ENCODE measurements at regions of chr7 and their contacts with region 1.

Region 1: GRCh38 chr7:26078437-26079336 is 73.3 kb upstream of the NFE2L3 start:
- DNase-seq: peak; percentile 66
- H3K4me3 Mint-ChIP-seq: no peak overlapping the region
- H3K27ac Mint-ChIP-seq: no peak overlapping the region
- H3K4me1 Mint-ChIP-seq: peaks cover 9% of the 10 kb centered on the region
- H3K27me3 Mint-ChIP-seq: peaks cover 76% of the 10 kb centered on the region

Region 2: DNA sequence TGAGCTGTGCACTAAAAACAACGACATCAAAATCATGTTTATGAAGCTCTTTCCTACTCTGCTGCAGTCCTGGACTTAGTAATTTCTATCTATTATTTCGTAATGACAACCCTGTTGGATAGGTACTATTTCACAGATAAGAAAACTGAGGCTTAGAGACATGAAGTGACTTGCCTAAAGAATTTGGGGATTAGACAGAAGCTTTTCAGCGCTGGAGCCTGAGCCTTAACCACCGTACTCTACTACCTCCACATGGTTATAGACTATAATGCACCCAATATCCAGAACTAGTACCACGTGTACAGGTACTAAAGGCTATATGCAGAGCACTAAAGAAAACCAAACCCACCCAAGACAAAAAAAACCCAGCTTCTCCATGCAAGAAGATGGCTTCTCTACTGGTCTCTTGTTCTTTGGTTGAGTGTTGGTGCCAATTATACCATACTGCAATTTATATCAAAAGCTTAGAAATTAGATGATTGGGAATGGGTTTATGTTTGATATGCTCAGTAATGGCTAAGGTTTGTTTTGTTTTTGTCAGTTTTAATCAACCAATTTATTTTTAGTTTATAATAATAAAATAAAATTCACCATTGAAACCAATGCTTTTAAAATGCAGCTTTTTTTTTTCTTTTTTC is 206.4 kb after region 1 on chr7:
- intact Hi-C with region 1: loop called (anchors 1 kb)
- DNase-seq: no peak
- H3K4me3 Mint-ChIP-seq: no peak overlapping the region
- H3K27ac Mint-ChIP-seq: no peak overlapping the region
- H3K4me1 Mint-ChIP-seq: peaks cover 6% of the 10 kb centered on the region
- H3K27me3 Mint-ChIP-seq: no peaks in the 10 kb centered on the region

Region 3: DNA sequence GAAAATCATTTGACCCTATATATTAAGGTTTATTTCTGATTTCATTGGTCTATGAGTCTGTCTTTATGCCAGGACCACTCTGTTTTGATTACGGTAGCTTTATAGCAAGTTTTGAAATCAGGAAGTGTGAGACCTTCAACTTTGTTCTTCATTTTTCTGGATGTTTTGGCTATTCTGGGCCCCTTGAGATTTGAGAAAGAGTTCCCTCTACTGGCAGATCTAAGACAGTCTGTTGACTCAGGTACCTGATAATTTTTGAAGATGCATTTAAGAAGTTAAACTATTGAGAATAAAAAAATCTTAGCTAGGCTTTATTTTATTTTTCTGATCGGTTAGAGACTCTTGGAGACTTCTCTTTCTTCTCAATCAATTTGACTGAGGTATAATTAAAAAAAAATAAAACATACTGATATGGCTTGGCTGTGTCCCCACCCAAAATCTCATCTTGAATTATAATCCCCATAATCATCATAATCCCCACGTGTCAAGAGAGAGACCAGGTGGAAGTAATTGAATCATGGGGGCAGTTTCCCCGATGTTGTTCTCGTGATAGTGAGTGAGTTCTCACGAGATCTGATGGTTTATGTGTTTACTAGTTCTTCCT is 422.2 kb after region 1 on chr7:
- intact Hi-C with region 1: loop called (anchors 10 kb)
- DNase-seq: no peak
- H3K4me3 Mint-ChIP-seq: no peak overlapping the region
- H3K27ac Mint-ChIP-seq: no peak overlapping the region
- H3K4me1 Mint-ChIP-seq: no peaks in the 10 kb centered on the region
- H3K27me3 Mint-ChIP-seq: peaks cover 13% of the 10 kb centered on the region